Posterior vena cava (tissue), 2 donors: ENCODE measurements at regions of chr15 and their contacts with region 1.

Region 1: GRCh38 chr15:32659340-32660155 is 18.0 kb downstream of the SCG5 start:
- DNase-seq: peak; percentile 85

Region 2: DNA sequence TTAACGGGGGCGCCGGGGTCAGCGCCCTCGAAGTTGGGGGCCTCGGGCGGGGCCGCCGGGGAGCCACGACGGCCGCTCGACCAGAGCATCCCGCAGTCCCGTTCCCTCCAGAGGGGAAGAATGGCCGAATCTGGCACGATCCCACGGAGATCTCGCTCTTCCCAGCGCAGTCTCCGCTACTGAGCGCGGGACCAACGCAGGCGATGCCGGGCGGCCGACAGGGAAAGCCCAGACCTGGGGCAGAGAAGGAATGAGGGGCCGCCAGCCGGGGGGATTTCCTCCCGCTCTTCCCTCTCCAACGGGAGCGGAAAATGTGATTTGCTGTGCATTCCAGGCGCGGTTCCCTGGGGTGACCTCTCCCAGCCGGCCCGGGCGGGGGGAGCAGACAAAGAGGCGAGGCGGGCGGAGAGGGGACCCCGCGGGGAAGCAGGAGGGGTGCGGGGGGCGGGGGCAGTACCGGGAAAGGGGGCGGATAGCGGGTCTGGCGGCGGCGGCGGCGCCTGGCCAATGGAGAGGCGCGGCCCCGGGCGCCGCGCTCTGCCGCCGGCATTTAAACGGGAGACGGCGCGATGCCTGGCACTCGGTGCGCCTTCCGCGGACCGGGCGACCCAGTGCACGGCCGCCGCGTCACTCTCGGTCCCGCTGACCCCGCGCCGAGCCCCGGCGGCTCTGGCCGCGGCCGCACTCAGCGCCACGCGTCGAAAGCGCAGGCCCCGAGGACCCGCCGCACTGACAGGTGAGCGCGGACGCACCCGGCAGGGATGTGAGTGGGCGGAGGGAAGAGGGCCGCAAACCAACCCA is 58.1 kb after region 1 on chr15 and contains the start of gene GREM1:
- intact Hi-C with region 1: no loop called
- DNase-seq: no peak
- total RNA-seq, gene GREM1: 283 to 825 TPM

Region 3: GRCh38 chr15:32855942-32856341 is 196.4 kb after region 1 on chr15:
- intact Hi-C with region 1: loop called in 1 of 2 experiments (anchors 10 kb)
- DNase-seq: no peak

Region 4: GRCh38 chr15:32994810-32995424 is 335.4 kb after region 1 on chr15:
- intact Hi-C with region 1: loop called in 1 of 2 experiments (anchors 2 kb)
- DNase-seq: no peak

Region 5: GRCh38 chr15:34271493-34271892 is 1611.9 kb after region 1 on chr15:
- intact Hi-C with region 1: no loop called
- DNase-seq: no peak